ENCODE measurements at regions of chr16 and their contacts with region 1.

Region 1: GRCh38 chr16:89343501-89344457 is 126.3 kb downstream of the ZNF778 start:
- DNase-seq: no peak
- ATAC-seq: no peak
- H3K4me3 Mint-ChIP-seq: no peak overlapping the region
- H3K27ac Mint-ChIP-seq: peak overlapping the region; percentile 83
- H3K4me1 Mint-ChIP-seq: peaks cover 62% of the 10 kb centered on the region
- H3K27me3 Mint-ChIP-seq: no peaks in the 10 kb centered on the region
- CTCF ChIP-seq: no peak

Region 2: DNA sequence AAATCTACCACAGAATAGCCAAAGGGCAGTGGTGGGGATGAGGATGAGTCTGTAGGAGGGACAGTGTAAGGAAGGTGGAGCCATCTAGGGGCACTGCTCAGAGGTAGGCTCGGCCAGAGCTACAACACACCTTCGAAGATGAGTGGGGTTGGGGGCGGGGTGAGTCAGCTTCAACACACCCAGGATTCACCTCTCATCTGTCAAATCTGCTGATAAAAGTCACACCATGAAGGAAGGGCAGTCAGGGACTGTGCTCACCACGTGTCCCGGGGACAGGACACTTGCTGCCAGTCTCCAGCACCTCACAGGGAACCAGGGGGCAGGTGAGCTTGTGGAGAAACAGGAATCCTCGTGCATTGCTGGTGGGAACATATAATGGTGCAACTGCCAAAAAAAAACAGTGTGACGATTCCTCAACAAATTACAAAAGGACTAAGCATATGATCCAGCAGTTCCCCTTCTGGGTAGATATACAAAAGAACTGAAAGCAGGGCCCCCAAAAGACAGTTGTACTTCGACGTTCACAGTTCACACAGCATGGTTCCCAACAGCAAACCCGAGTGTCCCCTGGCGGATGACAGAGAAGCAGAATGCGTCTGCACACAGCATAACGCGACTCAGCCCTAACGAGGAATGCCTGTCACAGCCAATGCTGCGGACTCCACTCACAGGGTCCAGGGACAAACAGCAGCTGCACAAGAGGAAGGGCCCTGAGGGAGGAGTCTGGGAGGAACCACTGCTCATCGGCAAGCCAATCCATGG is 13.5 kb after region 1 on chr16:
- CTCF ChIA-PET with region 1: interaction called, 12 read pairs
- POLR2A ChIA-PET with region 1: no interaction called
- DNase-seq: no peak
- ATAC-seq: peak; percentile 77
- H3K4me3 Mint-ChIP-seq: no peak overlapping the region
- H3K27ac Mint-ChIP-seq: peak overlapping the region; percentile 47
- H3K4me1 Mint-ChIP-seq: peaks cover 75% of the 10 kb centered on the region
- H3K27me3 Mint-ChIP-seq: no peaks in the 10 kb centered on the region
- CTCF ChIP-seq: no peak